ENCODE measurements at regions of chr9 and their contacts with region 1.

Region 1: GRCh38 chr9:85130260-85130659 is 460.7 kb downstream of the NTRK2 start:
- DNase-seq: no peak
- ATAC-seq: no peak
- H3K4me3 ChIP-seq: no peak overlapping the region
- H3K27ac ChIP-seq: no peak overlapping the region
- H3K4me1 ChIP-seq: no peaks in the 10 kb centered on the region
- H3K27me3 ChIP-seq: peaks cover 0 to 3% (median 0%) of the 10 kb centered on the region in 9 donors
- CTCF ChIP-seq: no peak
- POLR2A ChIP-seq: no peak

Region 2: GRCh38 chr9:84970432-84970831 is 159.8 kb before region 1 on chr9:
- intact Hi-C with region 1: loop called in 1 of 10 experiments (anchors 10 kb)
- DNase-seq: no peak
- ATAC-seq: no peak
- H3K4me3 ChIP-seq: no peak overlapping the region
- H3K27ac ChIP-seq: no peak overlapping the region
- H3K4me1 ChIP-seq: no peaks in the 10 kb centered on the region
- H3K27me3 ChIP-seq: peaks cover 0 to 20% (median 0%) of the 10 kb centered on the region in 9 donors
- CTCF ChIP-seq: no peak
- POLR2A ChIP-seq: no peak

Region 3: GRCh38 chr9:85182383-85182782 is 52.1 kb after region 1 on chr9:
- intact Hi-C with region 1: loop called in 1 of 10 experiments (anchors 5 kb)
- DNase-seq: no peak
- ATAC-seq: no peak
- H3K4me3 ChIP-seq: no peak overlapping the region
- H3K27ac ChIP-seq: no peak overlapping the region
- H3K4me1 ChIP-seq: no peaks in the 10 kb centered on the region
- H3K27me3 ChIP-seq: peaks cover 0 to 19% (median 0%) of the 10 kb centered on the region in 9 donors
- CTCF ChIP-seq: no peak
- POLR2A ChIP-seq: no peak

Region 4: GRCh38 chr9:85466834-85467233 is 336.6 kb after region 1 on chr9:
- intact Hi-C with region 1: no loop called
- DNase-seq: no peak
- ATAC-seq: no peak
- H3K4me3 ChIP-seq: no peak overlapping the region
- H3K27ac ChIP-seq: no peak overlapping the region
- H3K4me1 ChIP-seq: no peaks in the 10 kb centered on the region
- H3K27me3 ChIP-seq: no peaks in the 10 kb centered on the region
- CTCF ChIP-seq: no peak
- POLR2A ChIP-seq: no peak